ENCODE measurements at regions of chr3 and their contacts with region 1.

Region 1: GRCh38 chr3:188617988-188618701 is 464.2 kb downstream of the LPP start:
- DNase-seq: peak; percentile 64
- ATAC-seq: peak; percentile 69
- H3K4me3 ChIP-seq: no peak overlapping the region; a peak in 1 of 6 replicates
- H3K27ac ChIP-seq: peak overlapping the region; percentile 70
- H3K4me1 ChIP-seq: peaks cover 28% of the 10 kb centered on the region
- H3K27me3 ChIP-seq: no peaks in the 10 kb centered on the region
- CTCF ChIP-seq: no peak
- EP300 ChIP-seq: peak in 1 of 2 experiments; percentile 70; a peak in 2 of 4 replicates
- POLR2A ChIP-seq: no peak
- RAD21 ChIP-seq: no peak

Region 2: DNA sequence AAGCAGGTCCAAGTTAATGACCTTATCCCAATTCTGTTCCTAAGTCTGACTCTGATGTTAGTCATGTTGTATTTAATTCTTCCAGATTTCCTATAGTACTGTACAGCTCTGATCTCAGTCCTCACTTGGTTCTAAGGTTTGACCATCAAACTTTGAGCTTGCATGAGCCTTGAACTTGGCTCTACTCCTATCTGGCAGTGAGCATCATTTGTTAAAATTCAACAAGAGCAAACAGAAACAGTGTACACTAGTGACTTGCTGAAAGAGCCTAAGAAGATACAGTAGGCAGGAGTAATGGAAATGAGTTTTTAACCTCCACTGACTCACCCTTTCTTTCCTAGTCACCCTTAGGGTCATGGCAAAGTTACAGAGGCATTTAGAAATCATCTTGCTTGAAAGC is 102.5 kb after region 1 on chr3:
- CTCF ChIA-PET with region 1: no interaction called
- POLR2A ChIA-PET with region 1: no interaction called
- in situ Hi-C with region 1: no loop called
- intact Hi-C with region 1: loop called (anchors 10 kb)
- DNase-seq: peak; percentile 95
- ATAC-seq: peak; percentile 99
- H3K4me3 ChIP-seq: no peak overlapping the region
- H3K27ac ChIP-seq: peak overlapping the region; percentile 78
- H3K4me1 ChIP-seq: peaks cover 47% of the 10 kb centered on the region
- H3K27me3 ChIP-seq: no peaks in the 10 kb centered on the region
- CTCF ChIP-seq: no peak
- EP300 ChIP-seq: peak; percentile 74 to 99; a peak in 3 of 4 replicates
- POLR2A ChIP-seq: no peak
- RAD21 ChIP-seq: no peak